IMR-90 (cell line): ENCODE measurements at regions of chr19 and their contacts with region 1.

Region 1: DNA sequence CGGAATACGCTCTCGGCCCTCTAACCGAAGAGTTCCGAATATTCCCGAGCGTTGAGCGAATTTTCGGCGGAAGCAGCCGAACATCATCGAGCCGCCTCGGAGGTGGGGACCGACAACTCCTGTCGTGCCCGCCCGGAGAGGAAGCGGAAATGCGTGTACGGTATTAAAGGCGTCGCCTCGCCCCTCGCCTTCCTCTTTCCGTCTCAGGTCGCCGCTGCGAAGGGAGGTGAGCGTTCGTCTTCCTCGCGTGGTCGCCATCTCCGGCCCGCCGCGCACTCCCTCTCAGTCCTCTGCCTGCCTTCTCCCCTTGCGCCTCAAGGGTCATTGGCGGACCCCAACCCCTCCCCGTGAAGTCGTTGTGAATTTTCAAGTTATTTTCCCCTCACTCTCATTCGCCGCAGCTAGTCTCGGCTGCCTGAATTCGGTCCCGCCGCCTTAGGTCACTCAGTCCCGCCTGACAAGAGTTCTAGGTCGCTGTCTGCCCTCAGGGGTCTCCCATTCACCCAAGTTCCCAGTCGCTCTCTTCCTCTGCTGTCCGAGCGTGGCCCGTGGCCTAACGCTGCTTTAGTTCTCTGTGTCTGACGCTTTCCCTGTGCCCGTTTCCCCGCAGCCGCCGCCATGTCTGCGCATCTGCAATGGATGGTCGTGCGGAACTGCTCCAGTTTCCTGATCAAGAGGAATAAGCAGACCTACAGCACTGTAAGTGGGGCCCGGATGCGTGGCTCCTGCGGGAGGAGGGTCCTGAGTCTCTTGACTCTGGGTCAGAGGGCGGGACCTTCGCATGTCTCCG is at the start of gene RPL28:
- DNase-seq: peak; percentile 97
- ATAC-seq: peak; percentile 83
- H3K4me3 ChIP-seq: peak within 1 kb of the TSS; percentile 74
- H3K27ac ChIP-seq: peak within 1 kb of the TSS; percentile 93
- H3K4me1 ChIP-seq: peaks cover 41% of the 10 kb centered on the region
- H3K27me3 ChIP-seq: no peaks in the 10 kb centered on the region
- CTCF ChIP-seq: no peak
- POLR2A ChIP-seq: peak; percentile 100
- RAD21 ChIP-seq: no peak
- total RNA-seq, gene RPL28: 386 and 998 TPM in 2 replicates

Region 2: GRCh38 chr19:55279770-55280643 is 105.9 kb before region 1 on chr19 and contains the start of gene HSPBP1:
- CTCF ChIA-PET with region 1: no interaction called
- POLR2A ChIA-PET with region 1: no interaction called
- dilution Hi-C with region 1: no loop called
- in situ Hi-C with region 1: no loop called
- intact Hi-C with region 1: loop called (anchors 5 kb)
- DNase-seq: peak; percentile 91
- ATAC-seq: peak; percentile 83
- H3K4me3 ChIP-seq: peak within 1 kb of the TSS; percentile 70
- H3K27ac ChIP-seq: peak within 1 kb of the TSS; percentile 62
- H3K4me1 ChIP-seq: peaks cover 15% of the 10 kb centered on the region
- H3K27me3 ChIP-seq: no peaks in the 10 kb centered on the region
- CTCF ChIP-seq: no peak
- POLR2A ChIP-seq: peak; percentile 80
- RAD21 ChIP-seq: no peak
- total RNA-seq, gene HSPBP1: 19.7 and 21.0 TPM in 2 replicates

Region 3: GRCh38 chr19:55301459-55302317 is 84.2 kb before region 1 on chr19:
- CTCF ChIA-PET with region 1: interaction called, 5 read pairs
- POLR2A ChIA-PET with region 1: interaction called, 11 read pairs
- dilution Hi-C with region 1: no loop called
- in situ Hi-C with region 1: loop called (anchors 10 kb)
- intact Hi-C with region 1: loop called (anchors 5 kb)
- DNase-seq: peak; percentile 62
- ATAC-seq: peak; percentile 98
- H3K4me3 ChIP-seq: no peak overlapping the region
- H3K27ac ChIP-seq: no peak overlapping the region
- H3K4me1 ChIP-seq: no peaks in the 10 kb centered on the region
- H3K27me3 ChIP-seq: no peaks in the 10 kb centered on the region
- CTCF ChIP-seq: peak; percentile 89
- POLR2A ChIP-seq: no peak
- RAD21 ChIP-seq: peak; percentile 77